A549 (cell line): ENCODE measurements at regions of chr9 and their contacts with region 1.

Region 1: GRCh38 chr9:114906908-114907571 is 23.4 kb downstream of the TNFSF8 start:
- DNase-seq: peak; percentile 49 to 78
- ATAC-seq: peak; percentile 57 to 78
- H3K4me3 ChIP-seq: no peak overlapping the region
- H3K27ac ChIP-seq: peak overlapping the region; percentile 80 to 81
- H3K4me1 ChIP-seq: peaks cover 54% of the 10 kb centered on the region
- CTCF ChIP-seq: peak; percentile 78
- EP300 ChIP-seq: no peak
- POLR2A ChIP-seq: no peak
- RAD21 ChIP-seq: peak; percentile 95 to 96

Region 2: GRCh38 chr9:114434878-114435311 is 472.1 kb before region 1 on chr9:
- CTCF ChIA-PET with region 1: interaction called, 20 read pairs
- POLR2A ChIA-PET with region 1: no interaction called
- DNase-seq: peak; percentile 47 to 63
- ATAC-seq: peak; percentile 77 to 91; a peak in 5 of 6 replicates
- H3K4me3 ChIP-seq: no peak overlapping the region
- H3K27ac ChIP-seq: no peak overlapping the region
- H3K4me1 ChIP-seq: no peaks in the 10 kb centered on the region
- CTCF ChIP-seq: peak; percentile 66
- EP300 ChIP-seq: no peak
- POLR2A ChIP-seq: no peak
- RAD21 ChIP-seq: peak; percentile 78 to 87

Region 3: GRCh38 chr9:114674798-114675540 is 232.1 kb before region 1 on chr9:
- CTCF ChIA-PET with region 1: interaction called, 271 read pairs
- POLR2A ChIA-PET with region 1: interaction called, 6 read pairs
- DNase-seq: no peak
- ATAC-seq: no peak
- H3K4me3 ChIP-seq: no peak overlapping the region
- H3K27ac ChIP-seq: peak overlapping the region; percentile 82 to 91; a peak in 4 of 6 replicates
- H3K4me1 ChIP-seq: peaks cover 51% of the 10 kb centered on the region
- CTCF ChIP-seq: no peak
- EP300 ChIP-seq: no peak
- POLR2A ChIP-seq: no peak
- RAD21 ChIP-seq: no peak

Region 4: GRCh38 chr9:114706711-114707110 is 200.3 kb before region 1 on chr9:
- CTCF ChIA-PET with region 1: interaction called, 12 read pairs
- POLR2A ChIA-PET with region 1: no interaction called
- DNase-seq: no peak
- ATAC-seq: no peak
- H3K4me3 ChIP-seq: no peak overlapping the region
- H3K27ac ChIP-seq: no peak overlapping the region
- H3K4me1 ChIP-seq: no peaks in the 10 kb centered on the region
- CTCF ChIP-seq: no peak
- EP300 ChIP-seq: no peak
- POLR2A ChIP-seq: no peak
- RAD21 ChIP-seq: no peak

Region 5: DNA sequence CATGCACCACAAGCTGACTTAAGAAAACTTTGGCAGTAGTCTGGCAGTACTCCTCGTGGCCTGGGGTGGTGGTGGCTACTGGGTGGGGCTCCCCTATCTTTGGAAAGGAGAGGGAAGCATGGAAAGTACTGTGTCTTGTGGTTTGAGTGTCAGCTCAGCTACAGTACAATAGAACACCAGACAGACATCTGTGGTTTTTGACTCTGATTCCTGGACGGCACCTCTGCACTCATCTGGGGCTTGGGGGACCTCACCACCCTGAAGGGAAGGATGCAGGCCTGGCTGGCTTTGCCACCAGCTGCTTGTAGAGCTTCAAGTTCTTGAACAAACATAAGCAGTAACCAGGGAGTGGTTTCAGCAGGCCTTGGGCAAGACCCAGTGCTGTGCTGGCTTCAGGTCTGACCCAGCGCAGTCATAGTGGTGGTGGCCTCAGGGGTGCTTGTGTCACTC is 17.2 kb before region 1 on chr9:
- CTCF ChIA-PET with region 1: interaction called, 28 read pairs
- POLR2A ChIA-PET with region 1: interaction called, 4 read pairs
- DNase-seq: no peak
- ATAC-seq: peak in 1 of 2 experiments; percentile 21; a peak in 2 of 6 replicates
- H3K4me3 ChIP-seq: no peak overlapping the region
- H3K27ac ChIP-seq: peak overlapping the region; percentile 13 to 67; a peak in 4 of 6 replicates
- H3K4me1 ChIP-seq: peaks cover 57% of the 10 kb centered on the region
- CTCF ChIP-seq: no peak
- EP300 ChIP-seq: no peak
- POLR2A ChIP-seq: no peak
- RAD21 ChIP-seq: no peak

Region 6: DNA sequence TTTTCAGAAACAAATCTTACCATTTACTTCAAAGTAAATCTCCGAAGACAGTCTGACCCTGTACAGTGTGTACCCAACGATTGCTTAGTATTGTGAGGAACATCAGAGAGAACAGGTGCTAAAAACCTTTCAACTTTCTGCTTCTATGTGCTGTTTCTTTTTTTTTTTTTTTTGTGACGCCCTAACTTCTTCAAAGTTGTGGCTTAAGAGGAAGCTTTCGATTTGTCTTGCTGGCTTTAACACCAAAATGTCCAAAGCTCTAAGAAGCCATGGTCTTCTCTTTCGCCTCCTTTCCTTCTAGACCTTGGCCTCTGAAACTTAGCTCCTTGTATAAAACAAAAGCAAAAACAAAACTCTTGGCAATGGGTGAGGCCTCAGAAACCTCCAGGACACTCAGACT is 22.2 kb after region 1 on chr9:
- CTCF ChIA-PET with region 1: interaction called, 13 read pairs
- POLR2A ChIA-PET with region 1: no interaction called
- DNase-seq: no peak
- ATAC-seq: no peak
- H3K4me3 ChIP-seq: no peak overlapping the region
- H3K27ac ChIP-seq: no peak overlapping the region
- H3K4me1 ChIP-seq: no peaks in the 10 kb centered on the region
- CTCF ChIP-seq: no peak
- EP300 ChIP-seq: no peak
- POLR2A ChIP-seq: no peak
- RAD21 ChIP-seq: no peak

Region 7: GRCh38 chr9:115013998-115014397 is 107.0 kb after region 1 on chr9:
- CTCF ChIA-PET with region 1: interaction called, 127 read pairs
- POLR2A ChIA-PET with region 1: no interaction called
- DNase-seq: peak; percentile 72 to 79
- ATAC-seq: peak; percentile 72 to 90
- H3K4me3 ChIP-seq: no peak overlapping the region
- H3K27ac ChIP-seq: no peak overlapping the region
- H3K4me1 ChIP-seq: 0 out of 3 replicates have a peak, but pooled peaks cover under 1% of the 10 kb centered on the region
- CTCF ChIP-seq: peak; percentile 93
- EP300 ChIP-seq: no peak
- POLR2A ChIP-seq: no peak
- RAD21 ChIP-seq: peak; percentile 98

Region 8: DNA sequence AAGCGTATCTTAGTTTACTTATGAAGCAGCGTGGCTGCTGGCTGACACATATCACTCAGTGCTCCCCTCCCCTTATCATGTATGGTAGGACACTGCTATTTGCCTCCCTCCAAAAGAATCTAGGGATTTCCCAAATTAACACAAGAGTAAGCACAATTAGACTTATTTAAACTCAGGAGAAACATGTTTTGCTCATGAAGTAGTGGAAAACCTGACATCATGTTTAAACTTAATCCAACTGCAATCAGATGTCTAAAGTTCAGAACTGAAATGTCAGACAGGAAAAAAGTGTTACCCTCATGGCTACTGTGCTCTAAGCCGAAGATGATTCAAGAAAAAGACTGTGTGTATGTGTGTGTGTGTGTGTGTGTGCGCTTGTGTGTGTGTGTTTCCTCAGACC is 535.0 kb after region 1 on chr9:
- CTCF ChIA-PET with region 1: no interaction called
- POLR2A ChIA-PET with region 1: no interaction called
- DNase-seq: no peak
- ATAC-seq: no peak
- H3K4me3 ChIP-seq: no peak overlapping the region
- H3K27ac ChIP-seq: no peak overlapping the region
- H3K4me1 ChIP-seq: no peaks in the 10 kb centered on the region
- CTCF ChIP-seq: no peak
- EP300 ChIP-seq: no peak
- POLR2A ChIP-seq: no peak
- RAD21 ChIP-seq: no peak